Ovary (tissue), 10 donors: ENCODE measurements at regions of chr1 and their contacts with region 1.

Region 1: DNA sequence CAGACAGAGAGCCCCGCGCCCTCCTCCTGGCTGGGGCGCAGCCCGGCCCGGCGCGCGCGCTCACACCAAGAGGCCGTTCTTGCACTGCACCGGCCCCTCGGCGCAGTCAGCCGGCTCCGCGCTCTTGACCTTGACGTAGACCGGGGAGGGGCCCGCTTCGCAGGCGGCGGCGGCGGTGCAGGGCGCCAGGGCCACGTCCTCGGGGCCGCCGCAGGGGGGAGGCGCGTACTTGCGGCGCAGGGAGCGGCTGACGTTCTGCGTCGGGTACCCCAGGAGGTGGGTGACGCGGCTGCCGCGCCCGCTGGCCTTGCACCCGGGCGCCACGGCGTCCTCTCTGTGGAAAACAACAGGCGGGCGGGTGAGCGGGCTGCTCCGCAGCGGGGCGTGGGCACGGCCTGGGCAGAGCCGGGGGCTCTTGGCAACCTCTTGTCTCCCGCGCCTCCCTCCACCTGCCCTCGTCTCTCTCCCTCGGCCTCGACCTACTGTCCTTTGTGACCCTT is 7.7 kb downstream of the VSIG8 start:
- DNase-seq: peak; percentile 89 to 94 (median 91)
- H3K4me3 ChIP-seq: peak overlapping the region; percentile 73
- H3K27ac ChIP-seq: peak overlapping the region; percentile 90 to 98
- H3K4me1 ChIP-seq: peaks cover 3% of the 10 kb centered on the region
- H3K27me3 ChIP-seq: no peaks in the 10 kb centered on the region
- CTCF ChIP-seq: peak in 2 of 3 donors; percentile 11 to 49
- EP300 ChIP-seq: no peak
- POLR2A ChIP-seq: peak; percentile 82

Region 2: GRCh38 chr1:159798893-159799292 is 55.9 kb before region 1 on chr1:
- intact Hi-C with region 1: loop called in 1 of 4 experiments (anchors 2 kb)
- DNase-seq: peak; percentile 55 to 77 (median 64)
- H3K4me3 ChIP-seq: no peak overlapping the region
- H3K27ac ChIP-seq: no peak overlapping the region
- H3K4me1 ChIP-seq: peaks cover under 1% of the 10 kb centered on the region
- H3K27me3 ChIP-seq: no peaks in the 10 kb centered on the region
- CTCF ChIP-seq: peak; percentile 60 to 69 (median 63)
- EP300 ChIP-seq: no peak
- POLR2A ChIP-seq: peak; percentile 20

Region 3: DNA sequence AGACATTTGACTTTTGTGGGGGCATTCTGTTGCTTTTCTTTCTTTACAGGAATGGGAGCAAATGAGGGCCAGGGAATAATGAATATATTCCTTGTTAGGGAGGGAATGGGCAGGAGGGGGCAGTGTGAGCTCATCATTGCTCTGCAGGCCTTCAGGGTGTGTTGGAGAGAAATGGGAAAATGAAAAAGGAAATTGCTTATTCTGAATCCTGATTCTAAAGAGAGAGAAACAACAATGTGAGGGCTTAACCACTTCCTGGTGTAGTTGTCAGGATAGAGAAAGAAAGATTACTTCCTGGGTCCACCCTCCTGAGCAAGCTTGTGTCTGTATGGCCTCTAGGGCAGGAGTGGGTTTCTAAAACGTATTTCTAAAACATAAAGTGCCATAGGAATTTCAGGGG is 573.9 kb after region 1 on chr1:
- intact Hi-C with region 1: no loop called
- DNase-seq: peak in 2 of 5 donors; percentile 44 to 60
- H3K4me3 ChIP-seq: no peak overlapping the region
- H3K27ac ChIP-seq: no peak overlapping the region
- H3K4me1 ChIP-seq: no peaks in the 10 kb centered on the region
- H3K27me3 ChIP-seq: no peaks in the 10 kb centered on the region
- CTCF ChIP-seq: peak in 1 of 3 donors; percentile 12
- EP300 ChIP-seq: no peak
- POLR2A ChIP-seq: no peak